ENCODE measurements at regions of chr20 and their contacts with region 1.

Region 1: DNA sequence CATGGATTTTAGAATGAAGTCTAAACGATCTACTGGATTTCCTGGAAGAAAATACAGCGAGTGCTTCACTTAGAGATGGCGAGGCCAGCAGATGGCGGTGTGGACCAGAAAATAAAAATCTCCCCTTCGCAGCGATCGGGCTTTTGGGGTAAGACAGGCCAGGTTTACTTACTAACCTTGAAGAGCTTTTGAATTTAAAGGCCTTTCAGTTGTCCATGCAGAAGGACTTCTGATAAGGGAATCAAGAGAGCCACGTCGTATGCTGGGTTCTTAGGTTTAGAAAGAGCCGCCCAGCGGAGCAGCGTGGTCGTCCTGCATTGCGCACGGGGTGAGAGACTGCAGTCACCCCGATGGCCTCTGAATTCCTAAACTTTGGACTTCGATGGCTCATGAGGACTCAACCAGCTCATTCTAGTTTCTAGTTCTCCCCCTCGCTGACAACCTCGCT is 125.2 kb upstream of the RALGAPA2 start:
- DNase-seq: no peak
- ATAC-seq: peak; percentile 85
- H3K4me3 ChIP-seq: peak overlapping the region in 1 of 2 experiments; percentile 37; a peak in 2 of 4 replicates
- H3K27ac ChIP-seq: no peak overlapping the region
- H3K4me1 ChIP-seq: no peaks in the 10 kb centered on the region
- H3K27me3 ChIP-seq: no peaks in the 10 kb centered on the region
- CTCF ChIP-seq: peak; percentile 86

Region 2: GRCh38 chr20:20712474-20713243 is 124.9 kb before region 1 on chr20 and contains the start of gene RALGAPA2:
- CTCF ChIA-PET with region 1: no interaction called
- POLR2A ChIA-PET with region 1: no interaction called
- in situ Hi-C with region 1: no loop called
- intact Hi-C with region 1: no loop called
- DNase-seq: peak; percentile 90
- ATAC-seq: peak; percentile 98
- H3K4me3 ChIP-seq: peak within 1 kb of the TSS; percentile 72
- H3K27ac ChIP-seq: peak within 1 kb of the TSS; percentile 55
- H3K4me1 ChIP-seq: peaks cover 11% of the 10 kb centered on the region
- H3K27me3 ChIP-seq: no peaks in the 10 kb centered on the region
- CTCF ChIP-seq: no peak
- total RNA-seq, gene RALGAPA2: 13.4 TPM

Region 3: GRCh38 chr20:21228511-21228910 is 390.9 kb after region 1 on chr20:
- CTCF ChIA-PET with region 1: no interaction called
- POLR2A ChIA-PET with region 1: no interaction called
- in situ Hi-C with region 1: no loop called
- intact Hi-C with region 1: loop called (anchors 10 kb)
- DNase-seq: no peak
- ATAC-seq: no peak
- H3K4me3 ChIP-seq: no peak overlapping the region
- H3K27ac ChIP-seq: no peak overlapping the region
- H3K4me1 ChIP-seq: no peaks in the 10 kb centered on the region
- H3K27me3 ChIP-seq: no peaks in the 10 kb centered on the region
- CTCF ChIP-seq: no peak